ENCODE measurements at regions of chr4 and their contacts with region 1.

Region 1: DNA sequence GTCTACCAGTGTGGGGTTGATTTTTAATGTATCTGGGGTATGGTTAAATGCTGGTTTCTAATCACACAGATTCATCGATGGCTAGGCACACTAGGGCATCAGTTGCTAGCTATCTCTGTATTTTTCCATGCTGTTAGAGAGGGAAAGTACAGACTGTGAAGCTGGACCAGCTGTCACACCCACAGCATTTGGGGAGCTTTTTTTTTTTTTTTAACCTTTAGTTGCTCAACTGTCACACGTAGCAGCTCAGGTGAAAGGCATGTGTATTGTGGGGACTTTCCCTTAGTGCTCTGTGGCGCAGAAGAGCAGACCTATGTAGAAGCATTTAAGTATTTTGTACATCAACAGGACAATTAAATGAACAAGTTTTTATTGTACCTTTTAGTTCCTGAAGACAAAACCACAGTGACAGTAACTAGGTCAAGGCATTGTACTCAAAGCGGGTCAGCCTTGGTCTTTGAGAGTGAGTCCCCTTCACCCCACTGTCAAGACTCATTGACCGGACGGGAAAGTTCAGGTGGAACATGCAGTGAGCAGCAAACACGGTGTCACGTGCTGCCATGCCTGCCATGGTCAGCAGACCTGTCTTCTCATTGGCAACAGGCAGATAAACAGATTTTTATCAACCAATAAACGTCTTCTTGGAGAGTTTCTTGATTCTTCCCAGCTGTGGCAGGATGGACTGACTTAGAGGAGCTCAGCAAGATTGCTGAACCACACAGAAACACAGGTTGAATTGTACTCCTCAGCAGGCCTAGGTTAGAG is 65.3 kb downstream of the CASP3 start:
- DNase-seq: no peak
- H3K4me3 ChIP-seq: no peak overlapping the region
- H3K27ac ChIP-seq: no peak overlapping the region
- H3K4me1 ChIP-seq: no peaks in the 10 kb centered on the region
- H3K27me3 ChIP-seq: no peaks in the 10 kb centered on the region
- CTCF ChIP-seq: no peak

Region 2: GRCh38 chr4:184563621-184564020 is 20.3 kb before region 1 on chr4:
- CTCF ChIA-PET with region 1: interaction called, 13 read pairs
- POLR2A ChIA-PET with region 1: interaction called, 7 read pairs
- intact Hi-C with region 1: no loop called
- DNase-seq: no peak
- H3K4me3 ChIP-seq: no peak overlapping the region
- H3K27ac ChIP-seq: no peak overlapping the region
- H3K4me1 ChIP-seq: no peaks in the 10 kb centered on the region
- H3K27me3 ChIP-seq: no peaks in the 10 kb centered on the region
- CTCF ChIP-seq: no peak

Region 3: GRCh38 chr4:184613405-184613804 is 29.5 kb after region 1 on chr4:
- CTCF ChIA-PET with region 1: no interaction called
- POLR2A ChIA-PET with region 1: interaction called, 10 read pairs
- intact Hi-C with region 1: no loop called
- DNase-seq: no peak
- H3K4me3 ChIP-seq: no peak overlapping the region
- H3K27ac ChIP-seq: no peak overlapping the region
- H3K4me1 ChIP-seq: no peaks in the 10 kb centered on the region
- H3K27me3 ChIP-seq: no peaks in the 10 kb centered on the region
- CTCF ChIP-seq: no peak

Region 4: DNA sequence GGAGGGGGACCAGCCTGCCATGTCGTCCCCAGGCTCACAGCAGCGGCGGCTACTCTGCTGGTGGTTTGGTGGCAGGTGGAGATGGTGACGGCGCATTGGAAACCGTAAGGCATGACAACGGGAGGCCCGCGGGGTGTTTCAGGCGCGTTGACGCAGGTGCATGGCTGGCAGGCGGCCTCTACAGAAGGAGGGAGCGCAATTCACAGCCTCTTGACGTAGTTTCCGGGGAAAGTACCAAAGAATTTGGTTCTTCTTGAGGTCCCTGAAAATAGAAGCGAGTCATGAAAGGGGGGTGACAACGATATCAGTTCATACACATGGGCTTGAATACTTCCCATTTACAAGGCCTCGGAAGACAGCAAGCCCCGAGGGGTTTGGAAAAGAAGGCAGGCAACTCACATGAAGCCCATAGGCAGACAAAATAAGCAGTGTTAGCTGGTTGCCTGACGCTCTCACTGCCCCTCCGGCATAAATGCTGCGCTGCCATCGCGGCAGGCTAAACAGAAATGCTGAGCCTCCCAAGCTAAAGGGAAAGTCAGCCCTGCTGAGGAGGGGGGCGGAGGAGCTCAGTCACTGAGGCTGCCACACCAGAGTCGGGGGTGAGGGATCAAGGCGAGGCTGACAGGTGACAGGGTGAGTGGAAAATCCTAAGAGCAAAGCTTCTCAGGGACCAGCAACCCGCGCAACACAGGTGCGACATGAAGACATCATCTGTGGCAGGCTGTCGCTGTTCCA is 1003.7 kb after region 1 on chr4:
- CTCF ChIA-PET with region 1: no interaction called
- POLR2A ChIA-PET with region 1: no interaction called
- intact Hi-C with region 1: no loop called
- DNase-seq: no peak
- H3K4me3 ChIP-seq: no peak overlapping the region
- H3K27ac ChIP-seq: no peak overlapping the region
- H3K4me1 ChIP-seq: peaks cover 14% of the 10 kb centered on the region
- H3K27me3 ChIP-seq: no peaks in the 10 kb centered on the region
- CTCF ChIP-seq: no peak

Region 5: GRCh38 chr4:185859111-185859510 is 1275.2 kb after region 1 on chr4:
- CTCF ChIA-PET with region 1: no interaction called
- POLR2A ChIA-PET with region 1: no interaction called
- intact Hi-C with region 1: no loop called
- DNase-seq: no peak
- H3K4me3 ChIP-seq: no peak overlapping the region
- H3K27ac ChIP-seq: no peak overlapping the region
- H3K4me1 ChIP-seq: 0 out of 2 replicates have a peak, but pooled peaks cover 4% of the 10 kb centered on the region
- H3K27me3 ChIP-seq: no peaks in the 10 kb centered on the region
- CTCF ChIP-seq: no peak